ENCODE measurements at regions of chr15 and their contacts with region 1.

Region 1: DNA sequence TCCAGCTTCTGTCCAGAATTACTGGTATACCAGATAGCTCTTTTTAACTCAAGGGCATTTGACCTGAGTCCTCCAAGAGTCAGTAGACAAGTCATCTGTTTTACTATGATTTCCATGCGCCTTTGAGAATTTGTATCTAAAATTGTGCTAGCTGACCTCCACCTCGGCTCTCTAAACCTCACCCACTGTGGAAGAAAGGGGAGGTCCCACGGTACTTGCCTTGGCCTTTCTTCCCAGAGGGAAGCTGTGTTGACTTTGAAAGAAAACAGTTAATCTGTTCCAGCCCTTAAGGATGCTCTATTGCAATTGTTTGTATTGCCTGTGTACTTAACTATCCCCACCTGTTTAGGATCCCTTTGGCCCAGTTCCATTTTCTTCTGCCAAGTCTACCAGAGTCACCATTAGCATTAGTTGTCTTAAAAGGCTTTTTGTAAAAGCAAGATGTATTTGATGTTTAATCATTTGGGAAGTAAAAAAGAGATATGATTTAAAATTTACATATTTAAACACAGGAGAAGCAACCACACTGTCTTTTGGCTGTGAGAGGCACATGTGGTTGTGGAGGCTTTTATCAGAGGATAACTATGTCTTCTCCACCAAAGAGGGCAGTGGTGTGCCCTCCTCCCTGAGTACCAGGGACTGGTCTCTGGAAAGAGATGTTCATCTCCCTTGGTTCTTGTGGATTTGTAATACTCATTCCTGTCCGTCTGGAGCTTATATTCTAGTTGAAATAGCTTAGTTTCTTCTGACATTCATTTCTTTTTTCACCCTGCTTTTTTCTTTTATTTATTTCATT is 88.8 kb downstream of the CRTC3 start:
- DNase-seq: no peak
- ATAC-seq: no peak
- H3K4me3 Mint-ChIP-seq: no peak overlapping the region
- H3K27ac Mint-ChIP-seq: peak overlapping the region; percentile 54
- H3K4me1 Mint-ChIP-seq: peaks cover 21% of the 10 kb centered on the region
- H3K27me3 Mint-ChIP-seq: no peaks in the 10 kb centered on the region
- CTCF ChIP-seq: no peak

Region 2: DNA sequence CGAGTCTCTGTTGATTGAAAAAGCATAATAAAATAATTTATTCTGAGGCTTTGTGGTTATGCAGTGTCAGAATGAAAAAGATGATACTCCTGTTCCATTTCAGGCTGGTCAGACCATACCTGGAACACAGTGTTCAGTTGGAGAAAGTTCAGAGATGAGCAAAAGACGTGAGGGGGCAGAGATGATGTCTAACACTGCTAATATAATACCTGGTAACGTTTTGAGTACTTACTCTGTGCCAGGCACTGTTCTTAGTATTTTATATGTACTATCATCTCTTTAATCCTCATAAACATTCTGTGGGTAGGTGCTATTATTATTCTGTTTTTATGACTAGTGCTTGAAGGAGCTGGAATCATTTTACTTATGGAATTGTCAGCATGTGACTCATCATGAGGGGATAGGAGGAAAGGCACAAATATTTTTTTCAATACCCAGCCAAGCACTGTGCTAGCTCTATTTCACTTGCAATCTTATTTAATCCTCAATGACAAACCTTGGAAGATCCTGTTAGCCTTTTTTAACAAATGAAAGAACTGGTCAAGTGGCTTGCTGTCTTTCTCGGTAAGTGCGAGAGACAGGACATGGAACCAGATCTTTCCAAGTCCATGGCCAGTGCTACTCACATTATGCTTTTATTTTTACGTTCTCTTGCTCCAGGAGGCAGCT is 198.7 kb before region 1 on chr15:
- CTCF ChIA-PET with region 1: no interaction called
- POLR2A ChIA-PET with region 1: no interaction called
- intact Hi-C with region 1: loop called (anchors 10 kb)
- DNase-seq: no peak
- ATAC-seq: no peak
- H3K4me3 Mint-ChIP-seq: no peak overlapping the region
- H3K27ac Mint-ChIP-seq: no peak overlapping the region
- H3K4me1 Mint-ChIP-seq: peaks cover 64% of the 10 kb centered on the region
- H3K27me3 Mint-ChIP-seq: no peaks in the 10 kb centered on the region
- CTCF ChIP-seq: no peak

Measured in activated B cell treated with CpG ODN at 0.5 μM for 24 hours (primary cell).